ENCODE measurements at regions of chr2 and their contacts with region 1.

Region 1: DNA sequence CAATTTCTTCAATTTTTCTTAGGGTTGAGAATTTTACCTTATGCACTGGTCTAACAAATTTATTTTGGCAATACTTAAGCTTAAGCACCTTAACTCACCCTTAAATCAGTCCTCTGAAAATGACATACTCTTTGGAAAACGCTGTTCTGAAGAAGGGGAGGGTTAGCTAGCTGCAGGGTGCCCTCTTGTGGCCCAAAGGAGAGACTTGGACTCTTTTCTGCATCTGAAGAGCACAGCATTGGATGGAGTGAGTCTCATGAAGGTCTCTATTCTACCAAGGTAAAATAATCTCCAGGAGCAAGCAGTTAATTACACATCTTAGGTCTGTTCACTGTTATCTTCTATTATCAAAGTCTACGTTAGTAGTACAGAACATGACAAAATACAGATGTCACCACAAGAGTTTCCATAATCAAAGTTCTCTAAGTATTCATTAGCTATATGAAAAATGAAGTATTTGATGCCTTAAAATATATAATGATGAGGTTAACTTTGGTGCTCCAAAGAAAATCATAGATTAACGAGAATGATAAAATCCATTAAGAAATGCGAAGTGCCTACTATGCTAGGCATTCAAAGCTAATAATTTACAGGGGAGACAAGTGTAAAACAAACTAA is 24.4 kb downstream of the PUM2 start:
- H3K4me3 ChIP-seq: no peak overlapping the region
- H3K27ac ChIP-seq: no peak overlapping the region
- H3K4me1 ChIP-seq: peaks cover 5% of the 10 kb centered on the region; the same call in 1 of the 2 replicates
- CTCF ChIP-seq: peak; percentile 40; the same call in 1 of the 2 replicates

Region 2: GRCh38 chr2:20225294-20226151 is 100.7 kb before region 1 on chr2:
- CTCF ChIA-PET with region 1: interaction called, 13 read pairs
- POLR2A ChIA-PET with region 1: no interaction called
- H3K4me3 ChIP-seq: peak overlapping the region; percentile 60
- H3K27ac ChIP-seq: peak overlapping the region; percentile 31; the same call in 1 of the 2 replicates
- H3K4me1 ChIP-seq: peaks cover 14% of the 10 kb centered on the region
- CTCF ChIP-seq: peak; percentile 95

Region 3: GRCh38 chr2:20282916-20283592 is 43.2 kb before region 1 on chr2:
- CTCF ChIA-PET with region 1: interaction called, 13 read pairs
- POLR2A ChIA-PET with region 1: no interaction called
- H3K4me3 ChIP-seq: no peak overlapping the region
- H3K27ac ChIP-seq: no peak overlapping the region
- H3K4me1 ChIP-seq: no peaks in the 10 kb centered on the region
- CTCF ChIP-seq: no peak

Region 4: DNA sequence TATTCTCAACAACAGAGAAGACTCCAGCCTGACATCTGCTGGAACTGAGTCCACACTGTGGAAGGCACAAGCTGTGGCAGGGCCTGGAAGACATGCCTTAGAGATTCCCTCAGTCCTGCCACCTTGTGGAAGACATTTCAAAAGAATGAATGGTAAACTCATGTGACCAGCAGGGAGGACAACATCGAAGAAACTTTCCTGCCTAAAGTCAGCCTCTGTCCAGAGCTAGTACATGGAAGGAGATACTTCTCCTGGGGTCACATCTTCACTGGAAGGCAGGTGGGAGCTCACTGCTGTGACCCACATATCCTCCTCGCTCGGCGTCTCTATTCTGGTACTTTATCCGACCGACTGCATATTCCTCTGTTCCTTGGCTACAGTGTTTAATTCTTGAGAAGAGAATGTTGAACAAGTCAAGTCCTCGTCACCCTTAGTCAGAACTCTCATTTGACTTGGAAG is 35.1 kb before region 1 on chr2:
- CTCF ChIA-PET with region 1: interaction called, 44 read pairs
- POLR2A ChIA-PET with region 1: no interaction called
- H3K4me3 ChIP-seq: no peak overlapping the region
- H3K27ac ChIP-seq: no peak overlapping the region
- H3K4me1 ChIP-seq: no peaks in the 10 kb centered on the region
- CTCF ChIP-seq: peak; percentile 77

Region 5: DNA sequence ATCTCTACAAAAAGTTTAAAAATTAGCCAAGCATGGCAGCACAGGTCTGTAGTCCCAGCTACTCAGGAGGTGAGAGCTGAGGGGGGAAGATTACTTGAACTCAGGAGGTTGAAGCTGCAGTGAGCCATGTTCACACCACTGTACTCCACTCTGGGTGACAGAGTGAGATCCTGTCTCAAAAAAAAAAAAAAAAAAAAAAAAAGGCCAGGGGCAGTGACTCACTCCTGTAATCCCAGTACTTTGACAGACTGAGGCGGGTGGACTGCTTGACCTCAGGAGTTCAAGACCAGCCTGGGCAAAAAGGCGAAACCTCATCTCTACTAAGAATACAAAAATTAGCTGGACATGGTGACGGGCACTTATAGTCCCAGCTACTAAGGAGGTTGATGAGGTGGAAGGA is 12.6 kb before region 1 on chr2:
- CTCF ChIA-PET with region 1: interaction called, 32 read pairs
- POLR2A ChIA-PET with region 1: interaction called, 5 read pairs
- H3K4me3 ChIP-seq: no peak overlapping the region
- H3K27ac ChIP-seq: no peak overlapping the region
- H3K4me1 ChIP-seq: no peaks in the 10 kb centered on the region
- CTCF ChIP-seq: no peak

Region 6: DNA sequence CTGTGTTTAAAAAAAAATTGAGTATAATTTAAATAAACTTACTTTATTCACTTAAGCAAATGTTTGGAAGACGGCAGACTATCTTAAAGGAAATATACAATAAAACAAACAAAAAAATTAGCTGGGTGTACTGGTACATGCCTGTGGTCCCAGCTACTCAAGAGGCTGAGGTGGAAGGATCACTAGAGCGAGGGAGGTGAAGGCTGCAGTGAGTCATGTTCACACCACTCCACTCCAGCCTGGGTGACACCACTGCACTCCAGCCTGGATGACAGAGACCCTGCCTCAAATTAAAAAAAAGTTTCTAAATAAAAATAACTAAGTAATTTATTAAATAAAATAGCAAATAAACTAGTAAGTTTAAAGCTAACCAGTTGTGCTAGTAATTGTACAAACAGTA is 16.9 kb after region 1 on chr2:
- CTCF ChIA-PET with region 1: interaction called, 50 read pairs
- POLR2A ChIA-PET with region 1: no interaction called
- H3K4me3 ChIP-seq: no peak overlapping the region
- H3K27ac ChIP-seq: no peak overlapping the region
- H3K4me1 ChIP-seq: peaks cover 12% of the 10 kb centered on the region
- CTCF ChIP-seq: no peak

Region 7: GRCh38 chr2:20378792-20379519 is 52.7 kb after region 1 on chr2:
- CTCF ChIA-PET with region 1: interaction called, 11 read pairs
- POLR2A ChIA-PET with region 1: no interaction called
- H3K4me3 ChIP-seq: no peak overlapping the region
- H3K27ac ChIP-seq: no peak overlapping the region
- H3K4me1 ChIP-seq: peaks cover 10% of the 10 kb centered on the region
- CTCF ChIP-seq: peak; percentile 92

Measured in HEK293 (cell line).